ENCODE measurements at regions of chr16 and their contacts with region 1.

Region 1: DNA sequence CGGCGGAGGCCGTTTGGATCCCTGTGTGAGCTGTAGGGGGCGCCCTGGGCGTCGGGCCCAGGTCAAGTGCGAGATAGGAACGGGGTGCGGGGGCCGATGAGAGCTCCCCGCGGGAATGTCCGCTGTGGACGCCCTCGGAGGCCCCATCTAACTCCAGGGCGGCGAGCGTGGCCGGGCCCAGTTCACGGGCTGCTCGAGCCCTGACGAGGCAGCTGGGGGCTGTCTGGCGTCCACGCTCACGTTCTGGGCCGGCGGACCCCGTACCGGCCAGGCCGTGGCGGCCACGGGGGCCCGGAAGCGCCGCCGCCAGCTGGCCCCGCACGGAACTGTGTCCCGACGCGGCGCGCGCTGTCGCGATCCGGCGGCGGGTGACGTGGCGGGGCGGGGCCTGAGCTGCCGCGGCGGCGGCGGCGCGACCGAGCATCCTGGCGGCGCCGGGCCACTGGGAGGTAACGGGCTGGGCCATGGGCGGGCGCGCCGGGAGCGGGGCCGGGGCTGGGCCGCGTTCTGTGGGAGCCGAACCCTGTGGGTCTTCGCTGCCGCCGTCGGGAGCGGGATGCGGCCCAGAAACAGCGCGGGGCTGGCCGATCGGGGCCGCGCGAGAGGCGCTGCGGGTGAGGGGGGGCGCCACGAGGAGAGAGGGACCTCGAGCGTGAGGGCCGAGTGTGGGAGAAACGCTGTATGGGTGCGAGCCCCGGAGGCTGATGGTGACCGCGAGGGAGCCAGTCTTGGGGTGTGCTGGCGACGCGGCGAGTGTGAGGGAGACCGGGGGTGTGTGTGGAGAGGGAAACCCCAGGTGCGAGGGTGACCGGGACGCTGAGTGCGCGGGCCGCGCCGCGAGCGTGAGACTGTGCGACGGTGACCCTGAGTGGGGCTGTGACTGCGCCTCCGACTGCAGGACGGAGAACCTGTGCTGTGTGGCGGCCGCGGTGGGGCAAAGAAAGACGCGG is at the start of gene SLC7A6:
- DNase-seq: peak; percentile 71 to 86 (median 80)
- H3K4me3 ChIP-seq: peak within 1 kb of the TSS; percentile 78 to 88 (median 86)
- H3K27ac ChIP-seq: peak within 1 kb of the TSS; percentile 93 to 100 (median 98)
- H3K4me1 ChIP-seq: peaks cover 11 to 27% of the 10 kb centered on the region in 2 donors
- H3K27me3 ChIP-seq: no peaks in the 10 kb centered on the region
- CTCF ChIP-seq: peak; percentile 35 to 75 (median 66)
- POLR2A ChIP-seq: peak; percentile 34 to 84
- total RNA-seq, gene SLC7A6: 2.0 to 54.7 (median 22.5) TPM

Region 2: GRCh38 chr16:68310761-68311511 is 46.5 kb after region 1 on chr16 and contains the starts of genes PRMT7 and SLC7A6OS:
- intact Hi-C with region 1: loop called in 1 of 2 experiments (anchors 5 kb)
- DNase-seq: peak; percentile 88 to 93 (median 91)
- H3K4me3 ChIP-seq: peak within 1 kb of the TSS; percentile 62 to 99 (median 85)
- H3K27ac ChIP-seq: peak within 1 kb of the TSS; percentile 17 to 94 (median 76)
- H3K4me1 ChIP-seq: peaks cover 4 to 32% of the 10 kb centered on the region in 2 donors
- H3K27me3 ChIP-seq: no peaks in the 10 kb centered on the region
- CTCF ChIP-seq: peak in 5 of 6 experiments; percentile 14 to 48 (median 20)
- POLR2A ChIP-seq: peak in 1 of 2 donors; percentile 84
- total RNA-seq, gene PRMT7: 30.0 to 52.1 (median 39.1) TPM
- total RNA-seq, gene SLC7A6OS: 9.4 to 18.6 (median 13.8) TPM

Region 3: GRCh38 chr16:68590201-68590994 is 326.0 kb after region 1 on chr16:
- intact Hi-C with region 1: no loop called
- DNase-seq: peak in 6 of 7 donors; percentile 31 to 58 (median 46)
- H3K4me3 ChIP-seq: no peak overlapping the region
- H3K27ac ChIP-seq: no peak overlapping the region
- H3K4me1 ChIP-seq: no peaks in the 10 kb centered on the region
- H3K27me3 ChIP-seq: no peaks in the 10 kb centered on the region
- CTCF ChIP-seq: peak; percentile 34 to 59 (median 42)
- POLR2A ChIP-seq: no peak

Measured in adrenal gland (tissue), 19 donors.